ENCODE measurements at regions of chr1 and their contacts with region 1.

Region 1: DNA sequence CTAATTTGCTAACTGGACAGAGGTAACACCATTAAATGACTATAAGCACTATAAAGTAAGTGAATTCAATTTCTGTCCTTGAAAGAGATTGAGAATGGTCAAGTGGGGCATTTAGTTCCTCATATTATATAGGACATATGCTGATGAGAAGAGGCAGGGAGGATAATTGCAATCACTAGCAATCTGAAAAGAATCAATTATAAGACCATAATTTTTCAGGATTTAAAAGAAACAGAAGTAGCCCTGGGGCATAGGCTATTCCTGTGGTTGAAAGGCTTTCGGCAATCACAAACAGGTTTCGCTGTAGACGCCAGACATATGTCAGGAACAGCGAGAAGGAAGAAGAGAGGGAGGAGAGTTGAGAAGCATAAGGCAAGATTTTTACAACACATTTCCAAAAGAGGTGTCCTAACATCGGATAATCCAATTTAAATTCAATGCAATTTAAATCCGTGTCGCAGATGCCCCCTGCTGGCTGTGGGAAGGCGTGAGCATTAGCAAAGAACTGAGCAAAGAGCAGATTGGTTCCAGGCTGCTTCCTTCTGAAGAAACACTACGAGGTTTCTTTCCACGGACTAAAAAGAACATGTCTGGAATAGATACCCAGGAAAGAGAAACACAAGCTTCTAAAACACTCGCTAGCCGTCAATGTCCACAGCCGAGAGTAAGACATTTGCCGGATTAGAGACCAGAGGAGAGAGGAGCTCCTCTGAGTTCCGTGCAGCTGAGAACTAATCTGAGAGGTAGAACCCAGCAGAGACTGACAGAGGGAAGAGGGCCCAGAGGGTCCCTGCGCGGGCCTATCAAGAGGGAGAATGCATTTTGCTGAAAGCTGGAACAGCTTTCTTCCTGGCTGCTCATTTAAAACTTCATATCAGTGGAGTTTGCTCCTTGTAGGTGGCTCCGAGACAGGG is 27.9 kb downstream of the RGS5 start:
- DNase-seq: peak; percentile 52
- H3K4me3 ChIP-seq: no peak overlapping the region
- H3K27ac ChIP-seq: peak overlapping the region in 3 of 4 donors; percentile 43 to 71 (median 61)
- H3K4me1 ChIP-seq: peaks cover 0 to 11% (median 3%) of the 10 kb centered on the region in 4 donors
- H3K27me3 ChIP-seq: no peaks in the 10 kb centered on the region
- CTCF ChIP-seq: peak; percentile 68 to 76 (median 76)
- EP300 ChIP-seq: no peak
- POLR2A ChIP-seq: no peak

Region 2: DNA sequence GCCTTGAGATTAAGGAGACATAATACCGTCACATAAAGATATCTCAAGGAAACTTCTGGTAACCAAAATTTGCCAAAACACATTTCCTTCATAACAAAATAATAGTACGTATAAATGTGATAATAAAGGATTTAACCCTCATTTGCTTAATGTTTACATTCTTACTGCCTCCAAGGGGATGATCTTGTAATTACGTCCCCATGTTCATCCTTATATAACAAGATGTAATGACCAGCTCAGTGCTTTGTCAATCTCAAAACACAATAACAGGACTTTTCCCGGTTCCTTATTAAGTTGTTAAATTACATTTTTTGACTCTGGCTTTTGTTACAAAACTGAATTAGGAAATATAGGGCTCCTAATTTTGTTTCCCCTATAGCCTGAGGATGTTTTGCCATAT is 718.5 kb before region 1 on chr1:
- in situ Hi-C with region 1: no loop called
- intact Hi-C with region 1: no loop called
- DNase-seq: no peak
- H3K4me3 ChIP-seq: no peak overlapping the region
- H3K27ac ChIP-seq: no peak overlapping the region
- H3K4me1 ChIP-seq: no peaks in the 10 kb centered on the region
- H3K27me3 ChIP-seq: no peaks in the 10 kb centered on the region
- CTCF ChIP-seq: no peak
- EP300 ChIP-seq: no peak
- POLR2A ChIP-seq: no peak

Region 3: DNA sequence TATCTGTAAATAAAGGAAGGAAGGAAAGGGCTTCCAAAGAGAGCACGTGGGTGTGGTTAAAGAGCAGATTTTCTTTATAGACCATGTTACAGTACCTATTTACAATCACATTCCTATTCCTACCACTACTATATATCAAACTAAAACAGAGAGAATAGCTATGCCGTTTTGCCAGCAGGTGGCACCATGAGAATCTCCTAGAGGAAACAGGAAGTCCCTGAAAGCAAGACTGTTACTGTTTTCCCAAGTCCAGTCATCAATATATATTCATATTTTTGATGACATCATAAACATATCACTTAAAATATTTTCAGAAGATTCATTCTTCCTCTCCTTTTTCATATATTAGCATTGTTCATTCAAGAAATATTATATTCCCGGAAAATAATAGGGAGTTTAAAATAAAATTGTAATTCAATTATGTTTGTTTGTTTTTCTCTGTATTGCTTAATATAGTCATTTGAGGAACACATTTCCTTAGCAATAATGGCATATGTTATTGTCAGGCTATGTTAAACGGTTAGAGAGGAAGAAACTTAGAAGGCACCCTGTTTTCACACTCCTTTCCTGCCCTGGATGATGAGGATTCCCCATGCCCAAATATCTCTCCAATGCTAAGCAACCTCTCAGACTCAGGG is 320.4 kb before region 1 on chr1:
- in situ Hi-C with region 1: loop called (anchors 10 to 25 kb)
- intact Hi-C with region 1: no loop called
- DNase-seq: peak; percentile 63
- H3K4me3 ChIP-seq: no peak overlapping the region
- H3K27ac ChIP-seq: no peak overlapping the region
- H3K4me1 ChIP-seq: no peaks in the 10 kb centered on the region
- H3K27me3 ChIP-seq: no peaks in the 10 kb centered on the region
- CTCF ChIP-seq: peak; percentile 51 to 76 (median 63)
- EP300 ChIP-seq: no peak
- POLR2A ChIP-seq: no peak

Region 4: GRCh38 chr1:162878000-162878596 is 296.7 kb before region 1 on chr1:
- in situ Hi-C with region 1: loop called in 2 of 4 experiments (anchors 25 kb)
- intact Hi-C with region 1: loop called (anchors 10 kb)
- DNase-seq: peak; percentile 41
- H3K4me3 ChIP-seq: no peak overlapping the region
- H3K27ac ChIP-seq: no peak overlapping the region
- H3K4me1 ChIP-seq: no peaks in the 10 kb centered on the region
- H3K27me3 ChIP-seq: no peaks in the 10 kb centered on the region
- CTCF ChIP-seq: peak; percentile 41 to 59 (median 47)
- EP300 ChIP-seq: no peak
- POLR2A ChIP-seq: no peak

Region 5: GRCh38 chr1:163071405-163072255 is 103.2 kb before region 1 on chr1:
- in situ Hi-C with region 1: no loop called
- intact Hi-C with region 1: loop called (anchors 2 kb)
- DNase-seq: peak; percentile 46
- H3K4me3 ChIP-seq: no peak overlapping the region
- H3K27ac ChIP-seq: peak overlapping the region in 2 of 4 donors; percentile 8 to 36
- H3K4me1 ChIP-seq: no peaks in the 10 kb centered on the region
- H3K27me3 ChIP-seq: peaks cover 36% of the 10 kb centered on the region
- CTCF ChIP-seq: peak; percentile 42 to 55 (median 50)
- EP300 ChIP-seq: no peak
- POLR2A ChIP-seq: no peak